HEK293 (cell line): ENCODE measurements at regions of chr15 and their contacts with region 1.

Region 1: GRCh38 chr15:70722266-70723121 is 40.9 kb downstream of the UACA start:
- H3K4me3 ChIP-seq: no peak overlapping the region
- H3K27ac ChIP-seq: no peak overlapping the region
- H3K4me1 ChIP-seq: no peaks in the 10 kb centered on the region
- CTCF ChIP-seq: peak; percentile 30; the same call in 1 of the 2 replicates

Region 2: DNA sequence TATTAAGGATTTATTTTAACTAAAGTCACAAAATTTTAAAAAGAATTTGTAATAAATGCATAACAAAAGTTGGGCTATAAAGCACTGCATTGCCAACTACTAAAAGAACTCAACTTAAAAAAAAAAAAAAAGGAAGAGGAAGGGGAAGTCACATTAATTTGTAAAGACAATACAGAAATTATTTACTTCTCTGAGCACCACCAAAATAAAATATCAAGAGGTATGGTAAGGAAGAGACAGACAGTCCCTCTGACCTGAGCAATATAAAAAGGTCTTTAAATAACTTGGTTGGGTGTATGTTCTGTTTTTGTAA is 42.6 kb before region 1 on chr15:
- CTCF ChIA-PET with region 1: interaction called, 102 read pairs
- POLR2A ChIA-PET with region 1: no interaction called
- H3K4me3 ChIP-seq: no peak overlapping the region
- H3K27ac ChIP-seq: no peak overlapping the region
- H3K4me1 ChIP-seq: no peaks in the 10 kb centered on the region
- CTCF ChIP-seq: no peak

Region 3: DNA sequence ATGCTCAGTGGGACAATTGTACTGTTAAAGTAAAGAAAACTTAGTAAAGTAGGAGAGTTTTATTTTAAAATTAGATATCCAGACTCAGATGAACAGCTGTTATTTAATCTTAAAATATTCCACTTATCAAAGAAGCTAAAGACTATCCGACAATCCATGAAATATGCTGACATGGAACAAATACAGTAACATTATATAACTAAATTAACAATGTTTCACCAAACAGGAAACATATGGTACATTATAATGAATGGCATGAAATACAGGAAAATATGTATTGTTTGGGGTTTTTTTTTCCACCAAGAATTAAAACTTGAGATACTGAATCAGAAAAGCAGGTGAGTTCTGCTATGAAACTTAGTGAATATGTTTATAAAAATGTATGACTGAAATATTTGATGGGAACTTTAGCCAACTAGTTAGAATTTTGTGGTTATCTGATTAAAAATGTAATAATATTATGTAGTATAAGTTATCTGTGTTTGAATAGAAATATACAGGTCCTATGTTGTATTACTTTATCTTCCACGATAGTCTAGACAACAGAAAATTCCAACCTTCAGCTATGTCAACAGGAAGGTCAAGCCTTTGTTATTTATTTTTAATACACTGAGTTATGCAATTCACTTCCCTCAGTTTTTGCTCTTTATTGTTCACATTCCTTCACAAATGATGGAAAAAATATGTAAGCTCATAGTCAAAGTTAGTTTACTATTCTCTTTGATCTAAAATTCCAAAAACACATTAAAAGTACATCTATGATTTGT is 31.8 kb before region 1 on chr15:
- CTCF ChIA-PET with region 1: interaction called, 27 read pairs
- POLR2A ChIA-PET with region 1: no interaction called
- H3K4me3 ChIP-seq: no peak overlapping the region
- H3K27ac ChIP-seq: no peak overlapping the region
- H3K4me1 ChIP-seq: peaks cover 7% of the 10 kb centered on the region; the same call in 1 of the 2 replicates
- CTCF ChIP-seq: no peak

Region 4: GRCh38 chr15:70701891-70702568 is 20.5 kb before region 1 on chr15:
- CTCF ChIA-PET with region 1: interaction called, 45 read pairs
- POLR2A ChIA-PET with region 1: no interaction called
- H3K4me3 ChIP-seq: peak overlapping the region; percentile 38
- H3K27ac ChIP-seq: peak overlapping the region; percentile 32
- H3K4me1 ChIP-seq: peaks cover 56% of the 10 kb centered on the region
- CTCF ChIP-seq: no peak

Region 5: GRCh38 chr15:70741827-70742280 is 19.4 kb after region 1 on chr15:
- CTCF ChIA-PET with region 1: interaction called, 26 read pairs
- POLR2A ChIA-PET with region 1: interaction called, 3 read pairs
- H3K4me3 ChIP-seq: no peak overlapping the region
- H3K27ac ChIP-seq: no peak overlapping the region
- H3K4me1 ChIP-seq: peaks cover 34% of the 10 kb centered on the region
- CTCF ChIP-seq: no peak

Region 6: DNA sequence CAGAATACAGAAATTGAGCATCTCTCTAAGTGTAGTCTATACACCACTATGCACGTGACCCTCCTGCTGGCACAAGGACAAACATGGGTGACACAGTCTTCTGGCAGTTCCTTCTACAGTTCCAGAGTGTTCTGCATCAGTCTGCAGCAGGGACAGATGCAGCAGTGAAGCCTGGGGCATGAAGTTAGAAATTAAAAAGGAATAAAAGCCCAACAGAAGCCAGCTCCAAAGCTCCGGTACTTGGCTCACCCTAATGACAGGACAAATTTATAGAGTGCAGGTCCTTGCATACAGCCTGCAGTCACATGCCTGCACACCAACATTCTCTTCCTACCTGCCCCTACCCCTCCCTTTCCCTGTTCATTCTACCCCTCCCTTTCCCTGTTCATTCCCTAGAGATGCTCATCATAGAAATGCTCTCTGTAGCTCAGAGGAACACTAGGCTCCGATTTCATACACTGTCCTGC is 25.8 kb after region 1 on chr15:
- CTCF ChIA-PET with region 1: interaction called, 26 read pairs
- POLR2A ChIA-PET with region 1: interaction called, 3 read pairs
- H3K4me3 ChIP-seq: no peak overlapping the region
- H3K27ac ChIP-seq: no peak overlapping the region
- H3K4me1 ChIP-seq: peaks cover 21% of the 10 kb centered on the region
- CTCF ChIP-seq: no peak